ENCODE measurements at regions of chr11 and their contacts with region 1.

Region 1: DNA sequence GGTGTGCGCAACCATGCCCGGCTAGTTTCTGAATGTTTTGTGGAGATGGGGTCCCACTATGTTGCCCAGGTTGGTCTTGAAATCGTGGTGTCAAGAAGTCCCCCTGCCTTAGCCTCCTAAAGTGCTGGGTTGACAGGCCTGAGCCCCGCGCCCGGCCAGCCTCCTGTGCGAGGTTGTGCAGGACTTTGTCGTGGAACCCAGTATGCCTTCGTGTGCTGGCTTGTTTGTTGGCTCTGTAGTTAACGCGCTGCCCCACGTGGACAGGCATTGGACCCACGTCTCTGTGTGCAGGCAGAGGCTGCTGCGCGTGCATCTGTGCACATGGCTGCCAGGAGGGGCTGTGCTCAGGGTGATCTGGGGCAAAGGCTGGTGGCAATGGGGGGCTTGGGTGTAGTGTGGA is 33.9 kb upstream of the ZNF195 start:
- DNase-seq: no peak
- H3K4me3 ChIP-seq: no peak overlapping the region
- H3K27ac ChIP-seq: no peak overlapping the region
- H3K4me1 ChIP-seq: no peaks in the 10 kb centered on the region
- H3K27me3 ChIP-seq: no peaks in the 10 kb centered on the region
- CTCF ChIP-seq: no peak
- POLR2A ChIP-seq: no peak

Region 2: DNA sequence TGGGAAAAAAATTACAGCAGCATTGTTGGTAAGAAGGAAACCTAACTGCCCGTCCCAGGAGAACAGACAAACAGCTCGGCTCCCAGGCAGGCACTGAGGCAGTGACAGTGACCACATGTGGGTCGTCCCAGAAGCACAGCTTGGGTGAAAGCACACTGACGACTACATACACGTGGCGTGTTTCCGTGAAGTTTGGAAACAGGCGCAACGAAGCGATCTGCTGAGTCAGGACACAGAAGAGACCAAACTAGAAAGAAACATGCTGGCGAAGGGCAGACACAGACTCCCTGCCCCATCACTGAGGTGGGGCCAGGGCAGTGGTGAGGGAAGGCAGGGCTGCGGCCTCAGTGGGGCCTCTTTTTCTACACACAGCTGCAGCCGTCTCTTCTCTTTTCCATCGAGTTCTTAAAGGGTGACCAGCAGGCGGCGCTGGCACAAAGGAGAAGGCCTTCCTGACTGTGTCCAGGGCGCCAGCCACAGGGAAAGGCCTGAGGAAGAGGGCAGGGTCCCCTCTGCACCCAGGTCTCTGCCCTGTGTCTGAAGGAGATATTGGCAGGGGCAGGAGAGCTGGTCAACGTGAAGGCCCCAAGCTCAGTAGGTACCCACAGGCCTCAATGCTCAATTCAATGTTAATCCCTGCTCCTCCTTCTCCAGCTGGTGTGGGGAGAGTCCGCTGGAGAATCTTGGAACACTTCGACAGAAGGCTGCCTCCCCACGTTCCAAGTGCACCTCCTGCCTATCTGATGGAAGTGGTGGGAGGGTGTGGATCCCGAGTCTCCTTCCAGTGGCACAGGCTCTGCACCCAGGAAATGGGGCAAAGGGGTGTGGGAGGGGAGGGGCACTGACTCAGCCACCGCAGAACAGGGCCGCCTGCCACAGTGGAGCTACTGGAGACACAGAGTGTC is 375.5 kb before region 1 on chr11:
- CTCF ChIA-PET with region 1: interaction called, 19 read pairs
- POLR2A ChIA-PET with region 1: no interaction called
- dilution Hi-C with region 1: no loop called
- intact Hi-C with region 1: loop called (anchors 2 kb)
- DNase-seq: peak; percentile 54
- H3K4me3 ChIP-seq: no peak overlapping the region
- H3K27ac ChIP-seq: no peak overlapping the region
- H3K4me1 ChIP-seq: no peaks in the 10 kb centered on the region
- H3K27me3 ChIP-seq: no peaks in the 10 kb centered on the region
- CTCF ChIP-seq: peak; percentile 65 to 84
- POLR2A ChIP-seq: no peak

Region 3: DNA sequence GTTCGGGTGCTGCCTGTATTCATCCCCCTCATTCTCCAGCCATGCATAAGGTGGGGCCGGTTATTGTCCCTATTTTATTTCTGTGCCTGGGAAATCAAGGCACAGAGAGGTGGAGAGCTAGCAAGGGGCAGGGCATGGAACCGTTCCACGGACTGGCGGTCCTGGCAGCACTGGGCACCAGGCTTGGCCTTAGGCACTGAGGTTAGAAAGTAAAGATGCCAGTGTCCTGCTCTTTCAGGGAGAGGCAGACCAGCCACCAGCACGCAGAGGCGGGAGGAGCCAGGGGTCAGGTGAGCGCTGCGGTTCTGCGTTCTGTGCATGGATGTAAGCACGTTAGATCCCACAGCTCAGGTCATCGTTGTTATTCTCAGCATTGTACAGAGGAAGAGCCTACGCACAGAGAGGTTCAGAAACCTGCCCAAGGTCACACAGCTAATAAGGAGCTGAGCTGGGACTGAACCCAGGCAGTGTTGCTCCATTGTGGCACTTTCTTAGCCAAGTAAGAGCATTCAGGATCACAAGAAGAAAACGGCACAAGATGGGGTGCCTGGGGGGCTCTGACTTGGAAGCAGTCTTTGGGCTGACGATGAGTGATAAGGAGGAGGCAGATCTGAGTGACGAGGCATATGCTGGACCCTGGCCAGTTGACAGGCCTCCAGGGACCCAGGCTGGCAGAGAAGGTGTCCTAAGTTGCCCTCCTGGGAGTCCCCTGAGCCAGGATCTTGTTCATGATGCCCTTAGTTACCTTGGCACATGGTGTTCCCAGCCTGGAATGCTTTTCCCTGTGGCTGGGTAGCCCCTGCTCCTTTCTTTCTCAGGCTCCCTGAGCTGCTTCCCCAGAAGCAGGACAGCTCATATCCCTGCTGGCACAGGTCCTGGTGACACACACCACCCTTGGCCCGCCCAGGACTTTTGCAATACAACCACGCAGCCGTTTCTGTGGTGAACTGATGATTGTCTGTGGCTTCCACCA is 288.8 kb before region 1 on chr11:
- CTCF ChIA-PET with region 1: interaction called, 10 read pairs
- POLR2A ChIA-PET with region 1: no interaction called
- dilution Hi-C with region 1: no loop called
- intact Hi-C with region 1: no loop called
- DNase-seq: peak; percentile 83
- H3K4me3 ChIP-seq: no peak overlapping the region
- H3K27ac ChIP-seq: peak overlapping the region; percentile 67
- H3K4me1 ChIP-seq: peaks cover 25% of the 10 kb centered on the region
- H3K27me3 ChIP-seq: no peaks in the 10 kb centered on the region
- CTCF ChIP-seq: no peak
- POLR2A ChIP-seq: no peak

Region 4: DNA sequence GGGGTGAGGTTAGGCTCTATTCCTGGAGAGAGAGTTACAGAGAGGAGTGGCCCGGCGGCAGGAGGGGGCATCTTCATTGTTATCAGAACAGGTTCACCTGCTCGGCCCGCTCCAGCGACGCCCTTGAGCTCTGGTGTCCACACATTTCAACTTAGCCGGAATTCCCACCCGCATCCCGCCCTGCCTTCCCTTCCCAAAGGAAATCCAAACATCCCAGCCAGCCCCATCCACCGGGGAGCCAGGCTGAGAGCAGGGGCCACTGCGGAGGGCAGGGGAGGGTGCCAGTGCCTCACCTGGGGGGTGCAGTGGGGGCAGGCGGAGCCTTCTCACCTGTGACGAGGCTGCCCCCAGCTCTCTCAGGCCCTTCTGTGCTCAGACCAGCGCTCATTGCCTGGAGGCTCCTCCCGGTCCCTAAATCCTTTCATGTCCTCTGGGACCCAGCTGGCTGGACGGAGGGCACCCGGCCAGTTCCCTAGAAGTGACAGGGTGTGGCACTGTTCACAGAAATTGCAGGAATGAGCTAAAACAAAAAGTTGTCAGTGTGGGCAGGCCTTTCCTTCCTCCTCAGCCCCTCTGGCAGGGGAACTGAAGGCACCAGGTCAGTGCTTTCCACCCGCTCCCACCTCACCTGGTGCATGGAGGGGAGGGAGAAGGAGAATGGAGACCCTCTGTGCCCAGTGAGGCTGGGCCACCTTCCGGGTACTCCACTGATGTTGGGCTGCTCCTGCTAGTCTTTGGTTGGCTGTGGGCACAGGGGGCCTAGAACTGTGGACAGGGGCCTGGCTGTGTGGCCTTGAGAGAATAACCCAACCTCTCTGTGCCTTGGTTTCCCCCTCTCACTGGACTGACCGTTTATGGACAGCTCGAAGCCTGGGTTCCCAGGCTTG is 192.1 kb before region 1 on chr11:
- CTCF ChIA-PET with region 1: interaction called, 18 read pairs
- POLR2A ChIA-PET with region 1: no interaction called
- dilution Hi-C with region 1: no loop called
- intact Hi-C with region 1: no loop called
- DNase-seq: no peak
- H3K4me3 ChIP-seq: no peak overlapping the region
- H3K27ac ChIP-seq: no peak overlapping the region
- H3K4me1 ChIP-seq: no peaks in the 10 kb centered on the region
- H3K27me3 ChIP-seq: no peaks in the 10 kb centered on the region
- CTCF ChIP-seq: no peak
- POLR2A ChIP-seq: no peak

Region 5: GRCh38 chr11:3341298-3341697 is 71.5 kb before region 1 on chr11:
- CTCF ChIA-PET with region 1: interaction called, 151 read pairs
- POLR2A ChIA-PET with region 1: interaction called, 3 read pairs
- dilution Hi-C with region 1: no loop called
- intact Hi-C with region 1: no loop called
- DNase-seq: peak; percentile 43
- H3K4me3 ChIP-seq: no peak overlapping the region
- H3K27ac ChIP-seq: no peak overlapping the region
- H3K4me1 ChIP-seq: peaks cover 20% of the 10 kb centered on the region
- H3K27me3 ChIP-seq: no peaks in the 10 kb centered on the region
- CTCF ChIP-seq: peak; percentile 63 to 69
- POLR2A ChIP-seq: no peak

Region 6: GRCh38 chr11:3378426-3379423 is 34.1 kb before region 1 on chr11 and contains the start of gene ZNF195:
- CTCF ChIA-PET with region 1: interaction called, 36 read pairs
- POLR2A ChIA-PET with region 1: no interaction called
- dilution Hi-C with region 1: no loop called
- intact Hi-C with region 1: no loop called
- DNase-seq: peak; percentile 96
- H3K4me3 ChIP-seq: peak within 1 kb of the TSS; percentile 59 to 94 (median 90)
- H3K27ac ChIP-seq: peak within 1 kb of the TSS; percentile 82
- H3K4me1 ChIP-seq: peaks cover 12% of the 10 kb centered on the region
- H3K27me3 ChIP-seq: no peaks in the 10 kb centered on the region
- CTCF ChIP-seq: no peak
- POLR2A ChIP-seq: peak; percentile 89
- total RNA-seq, gene ZNF195: 32.5 and 41.7 TPM in 2 replicates